MCF 10A (cell line): ENCODE measurements at regions of chr3 and their contacts with region 1.

Region 1: GRCh38 chr3:27467545-27467944 is 16.6 kb downstream of the SLC4A7 start:
- DNase-seq: peak; percentile 60
- H3K4me3 Mint-ChIP-seq: no peak overlapping the region
- H3K27ac Mint-ChIP-seq: peak overlapping the region; percentile 76
- H3K4me1 Mint-ChIP-seq: peaks cover 7% of the 10 kb centered on the region
- H3K27me3 Mint-ChIP-seq: no peaks in the 10 kb centered on the region
- CTCF ChIP-seq: peak; percentile 36

Region 2: GRCh38 chr3:27312044-27312668 is 155.4 kb before region 1 on chr3:
- CTCF ChIA-PET with region 1: interaction called, 38 read pairs
- POLR2A ChIA-PET with region 1: interaction called, 3 read pairs
- intact Hi-C with region 1: loop called (anchors 1 kb)
- DNase-seq: peak; percentile 82
- H3K4me3 Mint-ChIP-seq: no peak overlapping the region
- H3K27ac Mint-ChIP-seq: peak overlapping the region; percentile 37
- H3K4me1 Mint-ChIP-seq: peaks cover 13% of the 10 kb centered on the region
- H3K27me3 Mint-ChIP-seq: no peaks in the 10 kb centered on the region
- CTCF ChIP-seq: peak; percentile 62

Region 3: DNA sequence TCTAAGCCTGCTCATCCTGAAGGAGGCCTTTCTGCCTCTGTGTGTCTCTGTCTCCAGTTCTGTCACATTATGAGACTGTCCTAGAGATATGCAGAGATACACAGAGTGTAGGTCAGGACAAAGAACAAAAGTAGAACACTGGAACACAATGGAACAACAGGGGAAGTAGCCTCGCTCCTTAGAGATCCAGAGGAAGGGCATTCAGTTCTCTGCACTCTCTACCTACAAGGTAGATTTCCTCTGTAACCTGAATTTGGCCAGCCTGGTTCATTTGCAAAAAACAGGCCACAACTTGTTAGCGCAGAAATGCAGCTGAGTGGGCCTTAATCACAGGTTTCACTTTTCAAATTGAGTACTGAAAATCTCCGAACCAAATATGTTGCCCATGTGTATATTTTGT is 117.7 kb before region 1 on chr3:
- CTCF ChIA-PET with region 1: interaction called, 10 read pairs
- POLR2A ChIA-PET with region 1: interaction called, 6 read pairs
- intact Hi-C with region 1: no loop called
- DNase-seq: no peak
- H3K4me3 Mint-ChIP-seq: no peak overlapping the region
- H3K27ac Mint-ChIP-seq: no peak overlapping the region
- H3K4me1 Mint-ChIP-seq: peaks cover 19% of the 10 kb centered on the region
- H3K27me3 Mint-ChIP-seq: no peaks in the 10 kb centered on the region
- CTCF ChIP-seq: no peak

Region 4: GRCh38 chr3:27366062-27366591 is 101.4 kb before region 1 on chr3:
- CTCF ChIA-PET with region 1: interaction called, 10 read pairs
- POLR2A ChIA-PET with region 1: interaction called, 3 read pairs
- intact Hi-C with region 1: no loop called
- DNase-seq: no peak
- H3K4me3 Mint-ChIP-seq: no peak overlapping the region
- H3K27ac Mint-ChIP-seq: no peak overlapping the region
- H3K4me1 Mint-ChIP-seq: peaks cover 13% of the 10 kb centered on the region
- H3K27me3 Mint-ChIP-seq: no peaks in the 10 kb centered on the region
- CTCF ChIP-seq: no peak

Region 5: DNA sequence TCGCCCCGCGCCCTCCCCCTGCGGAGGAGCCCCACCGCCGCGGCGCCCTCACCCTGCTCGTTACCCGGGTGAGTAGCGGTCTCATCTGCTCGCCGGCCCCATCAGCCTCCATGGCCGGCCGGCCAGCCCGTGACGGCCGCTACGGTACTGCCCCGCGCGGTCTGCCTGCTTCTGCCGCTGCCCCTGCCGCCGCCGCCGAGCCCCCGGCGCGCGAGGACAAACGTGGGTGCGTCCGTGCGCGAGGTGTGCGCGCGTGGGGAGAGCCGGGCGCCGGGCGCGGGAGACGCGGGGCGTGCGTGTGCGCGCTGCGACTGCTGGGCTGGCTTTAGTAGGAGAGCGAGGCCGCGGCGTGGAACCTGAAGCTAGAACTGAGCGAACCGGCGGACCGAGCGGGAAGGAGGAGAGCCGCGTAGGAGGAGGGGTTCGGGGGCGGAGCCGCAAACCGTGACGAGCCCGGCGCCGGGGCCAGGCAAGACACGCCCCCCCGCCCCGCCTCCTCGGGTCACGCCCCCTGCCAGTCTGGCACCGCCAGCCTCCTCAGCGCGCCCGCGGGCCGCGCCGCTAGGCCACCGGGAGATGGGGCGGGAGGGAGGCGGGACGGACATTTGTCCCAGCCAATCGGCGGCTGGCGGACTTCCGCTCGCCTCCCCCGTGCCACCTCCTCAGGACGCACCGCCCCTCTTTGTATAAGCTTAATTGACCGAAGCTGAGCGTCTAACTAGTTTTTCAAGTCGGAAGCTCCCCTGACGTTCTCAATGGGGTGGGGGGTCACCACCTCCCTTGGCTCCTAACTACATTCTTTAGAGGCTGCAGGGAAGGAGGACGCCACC is 16.7 kb after region 1 on chr3 and contains the start of gene SLC4A7:
- CTCF ChIA-PET with region 1: interaction called, 17 read pairs
- POLR2A ChIA-PET with region 1: interaction called, 50 read pairs
- intact Hi-C with region 1: no loop called
- DNase-seq: peak; percentile 94
- H3K4me3 Mint-ChIP-seq: peak within 1 kb of the TSS; percentile 100
- H3K27ac Mint-ChIP-seq: peak within 1 kb of the TSS; percentile 97
- H3K4me1 Mint-ChIP-seq: peaks cover 10% of the 10 kb centered on the region
- H3K27me3 Mint-ChIP-seq: no peaks in the 10 kb centered on the region
- CTCF ChIP-seq: no peak
- total RNA-seq, gene SLC4A7: 37.2 and 41.9 TPM in 2 replicates

Region 6: GRCh38 chr3:27590437-27591298 is 123.1 kb after region 1 on chr3:
- CTCF ChIA-PET with region 1: no interaction called
- POLR2A ChIA-PET with region 1: no interaction called
- intact Hi-C with region 1: no loop called
- DNase-seq: peak; percentile 41
- H3K4me3 Mint-ChIP-seq: no peak overlapping the region
- H3K27ac Mint-ChIP-seq: peak overlapping the region; percentile 1
- H3K4me1 Mint-ChIP-seq: peaks cover 24% of the 10 kb centered on the region
- H3K27me3 Mint-ChIP-seq: no peaks in the 10 kb centered on the region
- CTCF ChIP-seq: no peak

Region 7: GRCh38 chr3:27659279-27660021 is 191.9 kb after region 1 on chr3:
- CTCF ChIA-PET with region 1: interaction called, 3 read pairs
- POLR2A ChIA-PET with region 1: no interaction called
- intact Hi-C with region 1: loop called (anchors 5 kb)
- DNase-seq: peak; percentile 66
- H3K4me3 Mint-ChIP-seq: no peak overlapping the region
- H3K27ac Mint-ChIP-seq: no peak overlapping the region
- H3K4me1 Mint-ChIP-seq: peaks cover 5% of the 10 kb centered on the region
- H3K27me3 Mint-ChIP-seq: no peaks in the 10 kb centered on the region
- CTCF ChIP-seq: peak; percentile 82

Region 8: DNA sequence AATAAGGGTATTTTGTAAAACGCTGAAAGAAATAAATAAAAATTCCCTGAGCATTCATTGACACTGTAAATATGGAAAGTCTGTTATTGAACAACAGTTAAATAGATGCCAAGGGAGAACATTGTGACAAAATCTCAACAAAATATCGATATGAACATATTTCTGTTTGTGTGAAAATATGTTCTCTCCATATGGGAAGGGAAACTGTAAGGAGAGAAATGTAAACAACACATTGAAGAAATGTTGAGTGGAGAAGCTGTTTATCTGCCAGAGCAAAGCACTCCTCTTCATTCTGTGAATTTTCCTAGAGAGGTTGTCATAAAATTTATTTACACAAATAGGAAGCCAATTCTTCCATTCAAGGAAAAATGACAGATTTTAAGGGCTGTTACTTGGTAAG is 311.6 kb after region 1 on chr3:
- CTCF ChIA-PET with region 1: no interaction called
- POLR2A ChIA-PET with region 1: no interaction called
- intact Hi-C with region 1: no loop called
- DNase-seq: no peak
- H3K4me3 Mint-ChIP-seq: no peak overlapping the region
- H3K27ac Mint-ChIP-seq: no peak overlapping the region
- H3K4me1 Mint-ChIP-seq: no peaks in the 10 kb centered on the region
- H3K27me3 Mint-ChIP-seq: no peaks in the 10 kb centered on the region
- CTCF ChIP-seq: no peak